ENCODE measurements at regions of chr14 and their contacts with region 1.

Region 1: DNA sequence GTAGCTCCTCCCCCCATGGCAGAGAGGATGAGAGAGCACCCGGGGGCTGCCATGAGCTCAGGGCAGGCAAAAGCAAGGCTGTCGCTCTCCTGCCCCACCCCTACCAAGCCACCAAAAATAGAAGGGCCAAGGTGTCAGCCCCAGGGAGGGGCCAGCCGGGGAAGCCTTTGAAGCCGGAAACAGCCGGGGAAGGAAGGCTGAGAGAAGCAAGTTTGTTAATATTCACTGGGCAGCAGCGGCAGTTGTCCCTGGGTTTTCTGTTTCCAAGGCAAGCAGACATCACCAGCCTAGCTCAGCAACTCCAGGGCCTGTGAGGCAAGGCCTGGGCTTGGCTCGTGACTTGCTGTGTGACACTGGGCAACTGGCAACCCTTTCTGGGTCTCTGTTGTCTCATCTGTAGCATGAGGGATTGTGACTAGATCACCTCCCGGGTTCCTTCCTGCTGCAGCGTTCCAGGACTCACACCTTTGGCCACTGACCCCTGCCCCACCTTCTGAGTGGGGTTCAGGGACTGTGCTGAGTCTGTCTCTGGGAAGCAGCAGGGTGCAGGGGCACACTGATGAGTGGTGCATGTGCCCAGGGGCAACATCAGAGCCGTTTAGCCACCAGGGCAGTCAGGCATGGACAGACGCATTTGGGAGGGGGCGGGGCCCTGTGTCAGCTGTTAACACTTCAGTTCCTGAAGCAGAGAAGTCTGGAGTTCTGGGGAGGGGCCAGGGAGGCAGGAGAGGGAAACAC is 24.3 kb downstream of the SYNDIG1L start:
- DNase-seq: peak; percentile 70
- ATAC-seq: peak; percentile 73
- H3K4me3 Mint-ChIP-seq: peak overlapping the region; percentile 60
- H3K27ac Mint-ChIP-seq: peak overlapping the region; percentile 58
- H3K4me1 Mint-ChIP-seq: peaks cover 50% of the 10 kb centered on the region
- H3K27me3 Mint-ChIP-seq: no peaks in the 10 kb centered on the region
- CTCF ChIP-seq: no peak

Region 2: DNA sequence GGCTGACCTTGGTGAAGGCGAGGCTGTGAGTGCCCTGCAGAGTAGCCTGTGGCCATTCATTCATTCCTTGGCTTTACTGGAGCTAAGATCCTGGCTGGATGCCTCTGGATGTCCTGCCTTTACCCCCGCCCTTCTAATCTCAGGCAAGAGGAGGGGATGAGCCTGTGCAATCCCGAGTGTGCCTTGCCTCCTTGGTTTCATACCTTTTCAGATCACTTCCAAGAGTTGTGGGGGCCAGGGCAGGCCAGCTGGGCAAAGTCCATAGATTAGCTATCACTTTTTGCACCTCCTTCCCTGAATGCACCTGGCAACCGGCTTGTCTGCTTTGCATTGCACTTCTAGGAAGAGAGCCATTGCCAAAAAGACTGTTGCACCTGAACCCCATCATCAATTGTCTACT is 51.9 kb before region 1 on chr14:
- CTCF ChIA-PET with region 1: interaction called, 14 read pairs
- POLR2A ChIA-PET with region 1: no interaction called
- DNase-seq: no peak
- ATAC-seq: no peak
- H3K4me3 Mint-ChIP-seq: peak overlapping the region; percentile 93
- H3K27ac Mint-ChIP-seq: peak overlapping the region; percentile 85
- H3K4me1 Mint-ChIP-seq: peaks cover 50% of the 10 kb centered on the region
- H3K27me3 Mint-ChIP-seq: no peaks in the 10 kb centered on the region
- CTCF ChIP-seq: no peak

Region 3: DNA sequence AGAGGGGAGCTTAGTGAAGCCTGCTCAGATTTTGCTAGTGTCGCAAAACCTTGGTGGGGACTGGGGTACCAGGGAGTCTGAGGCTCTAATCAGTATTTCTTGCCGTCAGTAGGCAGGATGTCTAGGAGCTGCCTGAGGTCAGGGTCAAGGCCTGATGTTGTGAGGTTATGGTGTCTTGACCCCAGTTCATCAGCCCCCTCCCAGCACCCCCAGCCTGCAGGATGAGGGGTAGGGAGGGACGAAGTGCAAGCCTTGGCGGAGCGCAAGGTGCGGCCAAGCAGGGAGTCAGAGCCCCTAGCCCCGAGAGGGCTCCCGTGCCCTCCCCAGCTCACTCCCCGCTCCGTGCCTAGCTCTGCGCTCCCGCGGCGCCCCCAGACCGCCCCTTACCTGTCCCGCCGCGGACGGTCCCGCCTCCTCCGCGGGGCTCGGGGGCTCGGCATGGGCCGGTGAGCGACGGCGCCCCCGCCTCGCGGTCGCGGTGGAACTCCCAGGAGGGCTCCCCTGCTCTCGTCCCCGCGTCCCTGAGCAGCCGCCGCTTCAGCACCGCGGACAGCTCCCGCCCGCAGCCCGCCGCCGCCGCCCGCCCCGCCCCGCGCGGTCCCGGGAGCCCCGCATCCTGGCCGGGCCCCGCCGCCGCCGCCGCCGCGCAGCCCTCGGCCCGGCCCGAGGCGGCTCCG is 24.0 kb after region 1 on chr14:
- CTCF ChIA-PET with region 1: interaction called, 17 read pairs
- POLR2A ChIA-PET with region 1: no interaction called
- DNase-seq: peak; percentile 82
- ATAC-seq: peak; percentile 40
- H3K4me3 Mint-ChIP-seq: peak overlapping the region; percentile 55
- H3K27ac Mint-ChIP-seq: no peak overlapping the region
- H3K4me1 Mint-ChIP-seq: peaks cover 63% of the 10 kb centered on the region
- H3K27me3 Mint-ChIP-seq: peaks cover 22% of the 10 kb centered on the region
- CTCF ChIP-seq: no peak

Region 4: DNA sequence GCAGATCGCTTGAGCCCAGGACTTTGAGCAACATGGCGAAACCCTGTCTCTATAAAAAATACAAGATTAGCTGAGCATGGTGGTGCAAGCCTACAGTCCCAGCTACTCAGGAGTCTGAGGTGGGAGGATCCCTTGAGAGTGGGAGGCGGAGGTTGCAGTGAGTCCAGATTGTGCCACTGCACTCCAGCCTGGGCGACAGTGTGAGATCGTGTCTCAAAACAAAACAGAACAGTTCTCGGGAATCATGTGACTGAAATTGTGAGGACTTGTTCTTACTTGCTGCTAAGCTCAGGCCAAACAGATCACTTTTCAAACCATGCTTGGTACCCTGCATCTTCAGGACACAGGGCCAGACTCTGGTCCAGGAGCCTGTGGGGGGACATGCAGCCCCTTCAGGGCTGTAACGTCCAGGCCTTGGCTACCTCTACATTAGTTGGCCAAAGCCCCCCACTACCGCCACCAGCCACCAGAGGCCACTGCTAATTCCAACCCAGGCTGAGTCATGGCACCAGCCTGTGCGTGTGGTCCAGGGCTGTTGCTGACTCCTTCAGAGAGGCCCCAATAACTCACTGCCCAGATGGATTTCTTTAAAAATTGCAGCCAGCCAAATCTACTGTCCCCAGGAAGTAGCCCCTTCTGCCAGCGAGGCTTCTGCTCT is 57.7 kb after region 1 on chr14:
- CTCF ChIA-PET with region 1: interaction called, 11 read pairs
- POLR2A ChIA-PET with region 1: no interaction called
- DNase-seq: peak; percentile 77
- ATAC-seq: peak; percentile 98
- H3K4me3 Mint-ChIP-seq: no peak overlapping the region
- H3K27ac Mint-ChIP-seq: no peak overlapping the region
- H3K4me1 Mint-ChIP-seq: peaks cover 3% of the 10 kb centered on the region
- H3K27me3 Mint-ChIP-seq: peaks cover 4% of the 10 kb centered on the region; the same call in 1 of the 2 replicates
- CTCF ChIP-seq: peak; percentile 45

Region 5: DNA sequence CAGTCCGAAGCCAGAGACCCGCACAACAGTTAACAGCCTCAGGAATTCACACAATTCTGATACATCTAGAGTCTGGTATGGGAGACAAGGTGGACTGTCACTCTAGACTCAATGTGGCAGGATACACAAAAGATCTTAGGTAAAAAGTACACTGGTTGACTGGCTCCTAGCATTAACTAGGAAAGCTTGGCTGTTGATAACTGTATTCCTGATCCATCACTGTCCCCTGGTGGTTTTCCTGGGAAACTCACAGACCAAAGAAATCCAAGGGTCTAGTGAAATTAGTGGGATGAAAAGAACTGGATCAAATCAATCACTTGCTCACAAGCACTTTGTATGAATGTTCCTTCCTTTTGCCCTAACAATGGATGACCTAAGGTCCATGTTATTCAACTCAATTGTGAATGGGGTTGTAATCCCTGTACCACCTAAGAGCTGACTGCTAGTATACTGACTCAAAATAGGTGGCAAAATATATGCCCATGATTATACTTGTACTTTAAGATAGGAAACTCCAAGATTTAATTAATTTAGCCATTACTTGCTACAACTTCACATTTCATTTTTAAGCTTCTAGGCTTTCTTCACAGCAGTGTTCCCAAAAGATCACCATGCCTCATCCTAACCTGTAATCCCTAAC is 77.4 kb after region 1 on chr14:
- CTCF ChIA-PET with region 1: interaction called, 10 read pairs
- POLR2A ChIA-PET with region 1: no interaction called
- DNase-seq: no peak
- ATAC-seq: peak; percentile 77
- H3K4me3 Mint-ChIP-seq: no peak overlapping the region
- H3K27ac Mint-ChIP-seq: no peak overlapping the region
- H3K4me1 Mint-ChIP-seq: peaks cover 5% of the 10 kb centered on the region
- H3K27me3 Mint-ChIP-seq: no peaks in the 10 kb centered on the region
- CTCF ChIP-seq: peak; percentile 78

Region 6: GRCh38 chr14:74684434-74684833 is 282.8 kb after region 1 on chr14:
- CTCF ChIA-PET with region 1: no interaction called
- POLR2A ChIA-PET with region 1: no interaction called
- DNase-seq: no peak
- ATAC-seq: no peak
- H3K4me3 Mint-ChIP-seq: no peak overlapping the region
- H3K27ac Mint-ChIP-seq: peak overlapping the region; percentile 71
- H3K4me1 Mint-ChIP-seq: peaks cover 16% of the 10 kb centered on the region
- H3K27me3 Mint-ChIP-seq: no peaks in the 10 kb centered on the region
- CTCF ChIP-seq: no peak

Measured in WTC11 (cell line).